PC-9 (cell line): ENCODE measurements at regions of chr9 and their contacts with region 1.

Region 1: DNA sequence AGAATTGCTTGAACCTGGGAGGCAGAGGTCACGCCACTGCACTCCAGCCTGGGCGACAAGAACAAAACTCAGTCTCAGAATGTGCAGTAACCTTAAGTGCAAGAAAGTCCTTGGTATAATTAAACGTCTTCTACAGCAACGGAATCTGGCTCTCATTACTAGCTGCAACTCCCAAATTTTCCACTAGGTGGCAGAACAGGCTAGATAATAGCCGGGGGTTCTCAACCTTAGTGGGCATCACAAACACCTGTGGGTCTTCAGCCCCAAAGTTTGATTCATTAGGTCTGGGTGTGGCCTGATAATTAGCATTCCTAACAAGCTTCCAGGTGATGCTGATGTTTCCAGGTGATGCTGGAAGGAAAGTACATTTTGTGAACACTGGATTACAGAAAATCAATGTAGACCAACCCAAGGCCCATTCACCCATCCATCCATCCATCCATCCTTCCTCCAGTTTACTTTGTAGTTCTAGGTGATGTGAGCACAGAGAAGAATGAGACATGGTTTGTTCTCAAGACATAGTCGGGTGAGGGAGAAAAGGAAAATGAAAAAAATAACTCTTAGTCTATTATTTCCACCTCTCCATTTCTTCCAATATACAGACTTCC is 37.3 kb downstream of the FBXW2 start:
- DNase-seq: peak; percentile 48 to 61
- H3K4me3 ChIP-seq: no peak overlapping the region
- H3K27ac ChIP-seq: 0 out of 2 replicates have a peak overlapping the region, but pooled peaks have one; percentile 13
- H3K4me1 ChIP-seq: no peaks in the 10 kb centered on the region
- H3K27me3 ChIP-seq: no peaks in the 10 kb centered on the region
- CTCF ChIP-seq: peak; percentile 96

Region 2: DNA sequence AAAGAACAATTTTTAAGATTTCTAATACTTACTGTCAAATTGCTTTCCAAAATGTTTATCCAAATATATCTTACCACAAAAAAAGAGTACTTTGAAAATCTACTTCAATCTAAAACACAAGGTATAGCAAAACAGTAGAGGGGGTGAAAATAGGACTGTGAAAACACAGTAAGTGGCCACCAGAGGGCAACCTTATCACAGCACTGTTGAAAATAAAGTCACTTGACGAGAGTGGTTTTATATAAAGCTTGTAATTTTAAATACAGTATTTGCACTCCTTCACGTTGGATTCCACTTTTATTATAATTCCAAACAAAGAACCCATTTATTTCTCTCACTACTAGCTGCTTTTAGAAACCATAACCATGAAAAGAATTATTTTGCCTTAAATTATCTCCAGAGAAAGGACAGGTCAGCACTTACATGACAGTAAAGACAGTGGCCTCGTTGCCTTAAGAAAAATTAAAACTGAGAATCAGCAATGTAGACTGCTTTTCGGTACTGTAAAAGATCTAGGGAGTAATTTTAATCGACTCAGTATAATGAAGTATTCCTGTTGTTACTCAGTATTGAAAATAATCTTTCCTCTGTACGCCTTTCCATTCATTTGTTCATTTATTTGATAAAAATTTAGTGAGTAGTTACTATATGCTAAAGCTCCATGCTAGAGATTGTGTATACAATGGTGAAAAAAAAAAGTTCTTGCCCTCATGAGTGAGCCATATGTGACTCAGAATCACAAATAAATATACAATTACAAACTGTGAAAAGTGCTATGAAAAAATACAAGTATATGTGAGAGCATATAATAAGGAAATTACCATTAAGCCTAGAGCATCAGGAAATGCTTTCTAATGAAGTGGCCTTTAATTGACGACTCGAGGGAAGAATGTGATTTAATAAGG is 135.9 kb before region 1 on chr9:
- CTCF ChIA-PET with region 1: interaction called, 5 read pairs
- POLR2A ChIA-PET with region 1: no interaction called
- intact Hi-C with region 1: loop called (anchors 1 kb)
- DNase-seq: peak; percentile 49
- H3K4me3 ChIP-seq: no peak overlapping the region
- H3K27ac ChIP-seq: peak overlapping the region; percentile 41
- H3K4me1 ChIP-seq: peaks cover 20% of the 10 kb centered on the region
- H3K27me3 ChIP-seq: no peaks in the 10 kb centered on the region
- CTCF ChIP-seq: peak; percentile 89

Region 3: DNA sequence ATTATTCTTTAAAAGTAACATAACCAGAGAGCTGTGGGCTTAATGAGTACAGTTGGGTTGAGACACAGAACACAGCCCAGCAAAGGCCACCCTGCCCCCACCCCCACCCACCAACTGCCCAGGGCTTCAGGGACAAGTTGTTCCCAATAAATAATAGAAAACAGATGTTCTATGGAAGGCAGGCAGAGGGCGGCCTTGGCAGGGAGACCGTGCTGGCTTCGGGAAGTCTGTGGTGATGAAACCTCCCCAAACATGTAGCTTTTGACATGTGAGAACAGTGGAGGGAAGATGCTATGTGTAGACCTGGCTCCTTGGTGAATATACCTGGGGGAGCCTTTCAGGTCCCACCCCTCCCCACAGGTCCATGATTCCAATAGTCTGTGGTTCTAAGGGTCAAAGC is 160.7 kb after region 1 on chr9:
- CTCF ChIA-PET with region 1: no interaction called
- POLR2A ChIA-PET with region 1: no interaction called
- intact Hi-C with region 1: no loop called
- DNase-seq: no peak
- H3K4me3 ChIP-seq: no peak overlapping the region
- H3K27ac ChIP-seq: no peak overlapping the region
- H3K4me1 ChIP-seq: no peaks in the 10 kb centered on the region
- H3K27me3 ChIP-seq: no peaks in the 10 kb centered on the region
- CTCF ChIP-seq: no peak

Region 4: GRCh38 chr9:120936011-120936763 is 180.3 kb after region 1 on chr9:
- CTCF ChIA-PET with region 1: no interaction called
- POLR2A ChIA-PET with region 1: no interaction called
- intact Hi-C with region 1: loop called (anchors 1 kb)
- DNase-seq: peak; percentile 80 to 93
- H3K4me3 ChIP-seq: no peak overlapping the region
- H3K27ac ChIP-seq: peak overlapping the region; percentile 25; the same call in 1 of the 2 replicates
- H3K4me1 ChIP-seq: peaks cover 22% of the 10 kb centered on the region
- H3K27me3 ChIP-seq: no peaks in the 10 kb centered on the region
- CTCF ChIP-seq: peak; percentile 93

Region 5: DNA sequence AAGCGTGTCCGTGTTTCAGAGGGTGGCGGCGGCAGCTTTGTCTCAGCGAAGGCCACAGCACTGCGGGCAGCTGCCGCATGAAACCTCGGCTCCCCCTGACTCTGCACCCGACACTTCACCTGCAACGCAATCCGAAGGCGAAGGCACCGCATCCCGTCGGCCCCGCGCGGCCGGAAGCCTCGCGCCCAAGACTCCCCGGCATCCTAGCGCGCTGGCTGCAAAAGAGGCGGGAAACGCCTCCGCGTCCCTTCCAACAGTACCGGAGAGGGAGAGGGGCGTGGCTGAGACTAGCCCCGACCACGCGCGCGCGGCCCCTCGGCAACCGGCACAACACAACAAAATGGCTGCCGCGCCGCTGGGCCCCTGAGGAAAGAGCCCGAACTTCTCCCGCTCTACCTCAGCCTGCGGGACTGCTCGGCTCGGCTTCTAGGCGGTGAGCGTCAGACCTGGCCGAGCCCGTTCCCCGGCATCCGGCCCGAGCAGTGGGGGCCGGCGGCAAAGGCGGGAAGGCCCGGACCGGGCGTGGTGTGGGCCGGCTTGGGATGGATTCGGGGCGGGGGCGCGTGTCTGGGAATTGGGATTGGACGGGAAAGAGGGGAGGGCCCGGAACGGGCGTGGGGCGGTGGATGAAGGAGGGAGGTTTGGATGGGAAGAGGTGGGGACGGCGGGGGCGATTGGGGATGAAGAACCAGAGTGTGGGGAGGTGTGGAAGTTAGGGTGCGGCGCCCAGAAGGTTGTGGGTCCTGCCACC is 318.9 kb after region 1 on chr9 and contains the start of gene CNTRL:
- CTCF ChIA-PET with region 1: no interaction called
- POLR2A ChIA-PET with region 1: no interaction called
- intact Hi-C with region 1: loop called (anchors 1 kb)
- DNase-seq: peak; percentile 64 to 90
- H3K4me3 ChIP-seq: peak within 1 kb of the TSS; percentile 69
- H3K27ac ChIP-seq: peak within 1 kb of the TSS; percentile 26; the same call in 1 of the 2 replicates
- H3K4me1 ChIP-seq: peaks cover 15% of the 10 kb centered on the region; the same call in 1 of the 2 replicates
- H3K27me3 ChIP-seq: no peaks in the 10 kb centered on the region
- CTCF ChIP-seq: no peak
- total RNA-seq, gene CNTRL: 41.6 and 44.9 TPM in 2 replicates

Region 6: DNA sequence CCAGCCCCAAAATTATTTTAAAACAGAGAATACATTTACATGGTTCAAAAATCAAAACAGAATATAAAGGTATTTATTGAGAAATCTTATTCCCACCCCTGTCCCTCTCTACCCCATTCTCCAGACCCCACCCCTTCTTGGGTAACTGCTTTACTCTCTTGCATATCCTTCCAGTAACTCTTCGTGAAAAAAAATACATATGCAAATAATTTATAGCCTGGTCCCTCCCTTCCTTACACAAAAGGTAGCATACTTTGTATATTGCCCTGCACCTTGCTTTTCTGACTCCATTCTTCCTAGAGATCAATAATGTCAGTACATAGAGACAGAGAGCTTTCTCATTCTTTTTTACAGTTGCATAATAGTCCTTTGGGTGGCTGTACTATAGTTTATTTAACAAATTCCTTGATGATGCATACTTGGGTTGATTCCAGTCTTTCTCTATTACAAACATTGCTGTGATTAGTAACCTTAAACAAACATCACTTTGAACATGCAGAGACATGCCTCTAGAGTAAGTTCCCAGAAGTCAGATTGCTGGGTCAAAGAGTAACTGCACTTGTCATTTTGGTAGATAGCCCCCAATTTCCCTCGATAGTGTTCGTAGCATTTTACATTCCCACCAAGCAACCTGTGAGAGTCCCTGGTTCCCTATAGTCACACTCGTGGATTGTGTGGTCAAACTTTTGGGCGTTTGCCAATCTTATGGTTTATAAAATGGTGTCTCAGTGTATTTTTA is 566.3 kb after region 1 on chr9:
- CTCF ChIA-PET with region 1: no interaction called
- POLR2A ChIA-PET with region 1: no interaction called
- intact Hi-C with region 1: loop called (anchors 5 kb)
- DNase-seq: peak in 1 of 2 experiments; percentile 95
- H3K4me3 ChIP-seq: no peak overlapping the region
- H3K27ac ChIP-seq: peak overlapping the region; percentile 30
- H3K4me1 ChIP-seq: peaks cover 15% of the 10 kb centered on the region
- H3K27me3 ChIP-seq: no peaks in the 10 kb centered on the region
- CTCF ChIP-seq: no peak